ENCODE measurements at regions of chr20 and their contacts with region 1.

Region 1: DNA sequence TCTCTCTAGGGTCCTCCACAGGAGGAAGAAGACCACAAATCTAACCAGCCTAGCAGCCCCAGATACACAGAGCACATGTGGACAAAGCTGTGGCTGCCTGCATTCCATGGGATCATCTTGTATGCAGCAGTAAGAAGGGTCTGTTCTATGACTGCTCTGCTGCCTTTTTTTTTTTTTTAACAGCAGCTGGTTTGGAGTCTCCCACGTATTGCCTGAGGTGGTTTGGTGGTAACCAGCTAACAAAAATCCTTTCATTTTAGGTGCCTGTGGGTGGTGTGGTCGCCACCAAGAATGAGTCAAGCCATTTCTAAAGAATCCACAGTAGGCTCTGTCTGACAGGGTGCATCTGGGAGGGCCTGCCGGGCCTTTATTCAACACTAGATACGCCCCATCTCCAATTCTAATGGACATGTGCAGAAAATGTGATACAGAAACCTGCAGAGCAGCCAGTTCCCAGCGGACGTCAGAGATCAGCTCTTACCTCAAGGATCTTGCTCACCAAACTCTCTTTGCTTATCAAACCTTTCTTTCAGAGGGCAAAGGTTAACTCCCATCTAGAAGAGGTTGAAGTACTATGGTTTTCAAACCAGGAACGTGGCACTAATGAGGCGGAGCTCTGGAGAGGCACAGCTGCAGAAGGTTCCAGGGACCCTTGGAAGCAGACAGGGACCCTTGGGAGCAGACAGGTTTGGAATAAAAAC is 32.0 kb downstream of the GNAS-AS1 start:
- DNase-seq: peak; percentile 89
- ATAC-seq: peak; percentile 81
- H3K4me3 ChIP-seq: no peak overlapping the region
- H3K27ac ChIP-seq: no peak overlapping the region
- H3K4me1 ChIP-seq: peaks cover 5% of the 10 kb centered on the region
- H3K27me3 ChIP-seq: peaks cover 3% of the 10 kb centered on the region
- CTCF ChIP-seq: no peak
- POLR2A ChIP-seq: no peak
- RAD21 ChIP-seq: no peak

Region 2: DNA sequence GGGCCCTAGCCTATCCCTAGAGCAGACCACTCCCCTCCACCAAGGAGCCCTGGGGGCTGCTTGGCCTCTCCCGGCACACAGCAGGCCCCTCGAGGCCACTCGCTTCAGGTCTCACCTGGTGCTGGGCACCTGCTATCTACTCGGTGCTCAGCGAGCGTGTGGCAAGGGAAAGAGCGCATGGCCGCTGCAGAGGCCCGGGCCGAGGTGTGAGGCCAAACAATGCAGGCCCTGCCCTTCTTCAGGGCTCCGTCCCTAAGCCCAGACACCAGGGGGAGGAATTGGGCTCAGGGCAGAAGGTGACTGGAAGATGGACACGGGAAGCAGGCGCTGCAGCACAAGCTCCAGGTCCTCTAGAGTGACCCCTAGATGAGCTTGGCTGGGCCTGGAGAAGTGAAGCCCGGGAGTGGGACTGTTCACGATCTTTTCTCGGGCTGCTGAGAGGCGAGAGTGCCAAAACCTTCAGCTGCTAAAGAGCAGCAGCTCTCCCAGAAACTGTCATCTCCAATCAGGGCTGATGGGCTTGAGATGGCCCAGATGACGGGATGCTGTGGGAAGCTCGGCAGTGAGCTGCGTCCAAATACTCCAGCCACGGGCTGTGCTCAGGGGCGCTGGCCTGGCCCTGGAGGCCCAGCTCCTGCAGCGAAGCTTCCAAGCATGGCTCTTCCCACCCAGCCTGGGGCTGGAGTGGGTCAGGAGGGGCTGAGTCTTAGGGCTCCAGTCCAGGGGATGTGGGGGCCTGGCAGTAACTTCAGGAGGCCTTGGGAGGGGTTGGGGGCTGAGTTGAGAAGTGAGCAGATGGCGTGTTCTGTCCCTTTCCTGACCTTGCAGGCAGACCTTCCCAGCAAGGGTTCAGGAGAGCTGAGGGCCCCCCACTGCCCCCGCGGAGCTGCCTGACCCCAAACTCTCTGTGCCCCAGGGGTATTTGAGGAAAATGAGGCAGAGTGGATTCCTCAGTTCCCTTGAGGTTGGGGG is 347.3 kb before region 1 on chr20:
- CTCF ChIA-PET with region 1: no interaction called
- POLR2A ChIA-PET with region 1: no interaction called
- dilution Hi-C with region 1: no loop called
- in situ Hi-C with region 1: no loop called
- intact Hi-C with region 1: no loop called
- DNase-seq: peak; percentile 15
- ATAC-seq: peak; percentile 32; the same call in 1 of the 2 replicates
- H3K4me3 ChIP-seq: no peak overlapping the region
- H3K27ac ChIP-seq: no peak overlapping the region
- H3K4me1 ChIP-seq: no peaks in the 10 kb centered on the region; the same call in 1 of the 2 replicates
- H3K27me3 ChIP-seq: no peaks in the 10 kb centered on the region
- CTCF ChIP-seq: no peak
- POLR2A ChIP-seq: no peak
- RAD21 ChIP-seq: no peak

Region 3: GRCh38 chr20:58839474-58839874 is 20.7 kb after region 1 on chr20:
- CTCF ChIA-PET with region 1: interaction called, 3 read pairs
- POLR2A ChIA-PET with region 1: interaction called, 10 read pairs
- dilution Hi-C with region 1: no loop called
- in situ Hi-C with region 1: no loop called
- intact Hi-C with region 1: no loop called
- DNase-seq: peak; percentile 24
- ATAC-seq: peak; percentile 68
- H3K4me3 ChIP-seq: no peak overlapping the region; the same call in 1 of the 2 replicates
- H3K27ac ChIP-seq: no peak overlapping the region
- H3K4me1 ChIP-seq: no peaks in the 10 kb centered on the region; the same call in 1 of the 2 replicates
- H3K27me3 ChIP-seq: peaks cover 51% of the 10 kb centered on the region
- CTCF ChIP-seq: peak; percentile 31; the same call in 1 of the 2 replicates
- POLR2A ChIP-seq: no peak
- RAD21 ChIP-seq: peak; percentile 38

Region 4: GRCh38 chr20:58963064-58963584 is 144.4 kb after region 1 on chr20:
- CTCF ChIA-PET with region 1: no interaction called
- POLR2A ChIA-PET with region 1: no interaction called
- dilution Hi-C with region 1: no loop called
- in situ Hi-C with region 1: no loop called
- intact Hi-C with region 1: no loop called
- DNase-seq: no peak
- ATAC-seq: no peak
- H3K4me3 ChIP-seq: no peak overlapping the region
- H3K27ac ChIP-seq: no peak overlapping the region
- H3K4me1 ChIP-seq: no peaks in the 10 kb centered on the region
- H3K27me3 ChIP-seq: peaks cover 19% of the 10 kb centered on the region
- CTCF ChIP-seq: no peak
- POLR2A ChIP-seq: no peak
- RAD21 ChIP-seq: no peak